ENCODE measurements at regions of chr11 and their contacts with region 1.

Region 1: GRCh38 chr11:57885298-57886050 is 123.9 kb downstream of the CTNND1 start:
- DNase-seq: peak in 1 of 4 experiments; percentile 30
- ATAC-seq: peak; percentile 75
- H3K4me3 ChIP-seq: no peak overlapping the region
- H3K27ac ChIP-seq: no peak overlapping the region
- H3K4me1 ChIP-seq: no peaks in the 10 kb centered on the region
- H3K27me3 ChIP-seq: peaks cover 0 to 4% of the 10 kb centered on the region in 2 experiments; a peak in 3 of 5 replicates
- CTCF ChIP-seq: no peak
- EP300 ChIP-seq: no peak
- POLR2A ChIP-seq: no peak
- RAD21 ChIP-seq: no peak

Region 2: DNA sequence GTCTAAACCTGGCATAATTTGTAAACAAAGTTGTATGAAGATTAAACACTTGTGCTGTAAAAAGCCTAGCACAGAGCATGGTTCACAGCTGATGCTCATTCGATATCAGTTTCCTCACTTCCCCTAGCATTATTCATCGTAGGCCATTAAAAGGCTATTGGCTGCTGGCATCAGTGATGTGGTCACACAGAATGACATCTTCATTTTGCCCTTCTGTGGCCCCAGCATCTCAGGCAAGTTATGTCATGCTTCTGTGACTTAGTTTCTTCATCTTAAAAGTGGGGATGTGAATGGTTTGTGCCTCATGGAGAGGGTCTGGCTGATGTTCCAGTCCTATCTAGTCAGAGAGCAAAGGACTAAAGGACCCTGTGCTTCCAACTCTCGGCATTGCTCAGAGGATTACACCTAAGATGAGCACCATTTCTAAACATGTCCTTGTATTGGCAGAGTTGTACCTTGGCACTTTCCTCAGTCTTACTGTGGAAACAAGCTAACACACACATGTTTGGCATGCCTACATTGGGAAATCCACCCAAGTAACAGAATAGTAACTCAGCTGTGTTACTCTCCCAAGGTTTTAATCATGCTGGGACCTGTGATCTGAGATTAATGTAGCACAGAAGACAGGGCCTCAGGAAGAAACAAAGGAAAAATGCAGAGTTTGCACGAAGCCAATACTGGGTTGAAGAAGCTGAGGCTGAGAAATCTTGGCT is 54.7 kb after region 1 on chr11:
- CTCF ChIA-PET with region 1: no interaction called
- POLR2A ChIA-PET with region 1: no interaction called
- in situ Hi-C with region 1: no loop called
- intact Hi-C with region 1: loop called (anchors 10 kb)
- DNase-seq: no peak
- ATAC-seq: no peak
- H3K4me3 ChIP-seq: no peak overlapping the region
- H3K27ac ChIP-seq: no peak overlapping the region
- H3K4me1 ChIP-seq: no peaks in the 10 kb centered on the region
- H3K27me3 ChIP-seq: peaks cover 9 to 17% of the 10 kb centered on the region in 2 experiments; a peak in 3 of 5 replicates
- CTCF ChIP-seq: no peak
- EP300 ChIP-seq: no peak
- POLR2A ChIP-seq: no peak
- RAD21 ChIP-seq: no peak

Measured in K562 (cell line).